ENCODE measurements at regions of chr2 and their contacts with region 1.

Region 1: DNA sequence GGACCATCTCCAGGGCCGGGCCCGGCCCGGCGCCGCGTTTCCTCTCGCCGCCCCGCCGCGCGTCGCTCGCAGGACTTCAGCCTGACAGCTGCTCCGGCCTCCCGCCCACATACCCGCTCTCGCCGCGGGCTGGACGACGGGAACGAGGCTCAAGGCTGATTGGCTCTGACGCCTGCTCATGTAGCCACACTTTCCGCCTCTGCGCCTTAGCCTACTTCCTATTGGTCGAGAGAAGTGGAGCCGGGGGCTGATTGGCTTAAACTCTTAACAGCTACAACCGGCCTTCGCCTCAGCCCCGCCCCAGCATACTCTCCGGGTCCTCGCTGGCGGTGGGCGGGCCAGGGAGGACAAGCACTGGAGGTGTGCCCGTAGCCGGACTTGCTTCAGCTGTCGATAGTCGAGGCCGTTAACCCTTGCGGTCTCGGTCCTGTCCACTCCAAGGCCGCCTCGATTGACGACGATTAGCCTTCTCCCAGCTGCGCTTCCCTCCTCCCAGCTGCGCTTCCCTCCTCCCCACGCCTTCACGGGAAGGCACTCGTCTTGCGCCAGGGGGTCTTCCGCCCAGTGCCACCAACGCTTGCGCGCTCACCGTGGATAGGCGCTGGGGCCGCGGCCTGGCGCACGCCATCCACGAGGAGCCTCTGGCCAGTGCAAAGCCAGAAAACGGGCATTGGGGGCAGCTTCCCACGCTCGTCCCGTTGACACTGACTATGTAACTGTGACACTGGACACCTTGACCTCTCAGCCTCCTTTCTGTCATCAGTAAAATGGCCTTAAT is at the start of gene PRADC1:
- DNase-seq: peak; percentile 97
- H3K4me3 Mint-ChIP-seq: peak within 1 kb of the TSS; percentile 87
- H3K27ac Mint-ChIP-seq: peak within 1 kb of the TSS; percentile 80
- H3K4me1 Mint-ChIP-seq: peaks cover 29% of the 10 kb centered on the region
- H3K27me3 Mint-ChIP-seq: peaks cover 1% of the 10 kb centered on the region
- total RNA-seq, gene PRADC1: 12.9 to 13.6 TPM

Region 2: DNA sequence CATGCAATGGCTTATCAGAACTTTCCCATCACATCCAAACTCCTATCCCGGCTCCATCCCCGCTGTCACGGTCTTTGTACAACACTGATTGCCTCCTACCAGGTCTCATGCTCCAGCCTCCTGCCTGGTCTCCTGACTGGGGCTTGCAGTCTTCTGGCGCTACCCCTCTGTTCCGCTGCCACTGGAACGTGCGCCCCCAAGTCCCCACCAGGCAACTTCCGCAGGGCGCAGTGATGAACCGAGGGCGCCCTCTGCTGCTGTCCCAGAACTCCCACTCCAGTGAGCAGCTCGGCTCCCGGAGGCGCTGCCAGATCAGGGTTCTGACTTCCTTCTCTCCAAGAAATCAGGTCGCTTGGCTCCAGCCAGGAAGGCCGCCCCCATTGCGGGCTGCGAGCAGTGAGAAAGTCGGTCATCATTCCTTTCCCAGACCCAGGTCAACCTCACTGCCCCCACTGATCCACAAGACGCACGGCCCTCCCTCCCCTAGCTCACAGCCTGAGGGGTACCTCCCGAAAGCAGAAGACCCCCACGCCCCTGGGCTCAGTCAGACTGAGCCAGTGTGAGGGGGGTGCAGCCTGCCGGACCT is 76.7 kb before region 1 on chr2:
- CTCF ChIA-PET with region 1: no interaction called
- POLR2A ChIA-PET with region 1: no interaction called
- intact Hi-C with region 1: no loop called
- DNase-seq: peak; percentile 59
- H3K4me3 Mint-ChIP-seq: no peak overlapping the region
- H3K27ac Mint-ChIP-seq: no peak overlapping the region
- H3K4me1 Mint-ChIP-seq: no peaks in the 10 kb centered on the region
- H3K27me3 Mint-ChIP-seq: peaks cover 27% of the 10 kb centered on the region

Region 3: DNA sequence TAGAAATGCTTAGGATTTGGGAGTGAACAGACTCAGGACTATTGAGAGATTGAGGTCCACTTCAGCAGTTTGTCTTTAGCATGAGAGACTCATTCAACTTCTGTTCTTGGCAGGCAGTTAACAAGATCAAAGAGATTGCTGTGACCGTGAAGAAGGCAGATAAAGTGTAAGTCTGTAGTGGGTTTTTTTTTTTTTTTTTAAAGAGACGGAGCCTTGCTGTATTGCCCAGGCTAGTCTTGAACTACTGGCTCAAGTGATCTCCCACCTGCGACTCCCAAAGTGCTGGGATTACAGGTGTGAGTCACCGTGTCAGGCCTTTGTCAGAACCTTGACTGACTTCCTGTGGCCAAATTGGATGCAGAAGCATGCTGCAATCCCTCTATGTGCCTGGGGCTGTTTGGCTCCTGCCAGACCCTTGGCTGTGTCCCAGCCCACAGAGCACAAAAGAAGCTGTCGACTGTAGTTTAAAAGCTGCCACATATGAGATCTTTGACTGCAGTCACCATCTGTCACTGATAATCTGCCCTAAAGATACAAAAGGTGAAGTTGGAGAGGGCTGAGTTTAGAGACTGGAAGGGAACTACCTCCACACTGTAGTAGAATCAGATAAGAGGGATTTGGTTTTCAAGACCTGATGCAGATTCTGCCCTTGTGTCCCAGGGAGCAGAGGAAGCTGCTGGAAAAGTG is 10.7 kb after region 1 on chr2:
- CTCF ChIA-PET with region 1: no interaction called
- POLR2A ChIA-PET with region 1: interaction called, 18 read pairs
- intact Hi-C with region 1: no loop called
- DNase-seq: no peak
- H3K4me3 Mint-ChIP-seq: no peak overlapping the region
- H3K27ac Mint-ChIP-seq: peak overlapping the region; percentile 62
- H3K4me1 Mint-ChIP-seq: peaks cover 29% of the 10 kb centered on the region
- H3K27me3 Mint-ChIP-seq: no peaks in the 10 kb centered on the region

Region 4: GRCh38 chr2:73385595-73386341 is 152.4 kb after region 1 on chr2 and contains the start of gene ALMS1:
- CTCF ChIA-PET with region 1: interaction called, 3 read pairs
- POLR2A ChIA-PET with region 1: interaction called, 14 read pairs
- intact Hi-C with region 1: loop called (anchors 1 kb)
- DNase-seq: peak; percentile 94
- H3K4me3 Mint-ChIP-seq: peak within 1 kb of the TSS; percentile 92
- H3K27ac Mint-ChIP-seq: peak within 1 kb of the TSS; percentile 82
- H3K4me1 Mint-ChIP-seq: peaks cover 26% of the 10 kb centered on the region
- H3K27me3 Mint-ChIP-seq: no peaks in the 10 kb centered on the region
- total RNA-seq, gene ALMS1: 20.4 to 22.7 TPM